ENCODE measurements at regions of chr12 and their contacts with region 1.

Region 1: DNA sequence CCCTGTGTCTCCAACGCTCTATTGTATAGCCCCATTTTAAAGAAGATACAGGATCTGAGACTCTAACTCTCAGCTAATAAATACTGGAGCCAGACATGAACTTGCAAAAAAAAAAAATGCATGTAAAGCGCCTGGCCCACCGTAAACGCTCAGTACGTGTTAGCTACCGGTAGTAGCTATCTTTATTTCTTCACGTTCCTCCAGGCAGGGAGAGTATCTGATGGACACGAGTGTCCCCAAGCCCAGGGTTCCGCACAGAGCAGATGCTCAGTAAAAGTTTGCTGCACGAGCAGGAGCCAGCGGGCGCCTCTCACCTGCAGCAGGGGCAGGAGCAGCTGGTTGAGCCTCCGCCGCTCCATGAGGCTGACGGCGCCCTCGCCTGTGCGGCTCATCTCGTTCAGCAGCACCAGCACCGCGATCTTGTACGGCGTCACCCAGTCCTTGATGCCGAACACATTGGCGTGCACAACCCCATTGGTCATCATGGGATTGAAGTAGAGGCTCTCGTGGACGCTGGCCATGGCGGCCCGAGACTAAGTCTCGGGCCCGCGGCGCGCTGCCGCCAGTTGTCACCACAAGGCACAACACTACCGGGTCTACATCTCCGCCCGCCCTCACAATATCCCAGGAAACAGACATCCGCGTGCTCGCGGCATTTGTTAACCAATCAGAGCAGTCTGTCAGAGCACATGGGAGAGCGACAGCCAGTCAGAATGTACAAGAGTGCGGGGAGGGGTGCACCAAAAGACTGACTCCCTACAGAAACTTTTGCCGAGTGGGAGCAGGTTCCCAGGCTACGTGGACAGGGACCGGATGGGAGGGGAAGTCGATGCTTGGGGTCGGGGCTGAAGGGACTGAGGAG is at the start of gene ANAPC5:
- DNase-seq: peak; percentile 98
- H3K4me3 ChIP-seq: peak within 1 kb of the TSS; percentile 64 to 87 (median 76)
- H3K27ac ChIP-seq: peak within 1 kb of the TSS; percentile 79 to 85 (median 82)
- H3K4me1 ChIP-seq: peaks cover 0 to 28% (median 18%) of the 10 kb centered on the region in 4 donors
- H3K27me3 ChIP-seq: no peaks in the 10 kb centered on the region
- CTCF ChIP-seq: no peak
- EP300 ChIP-seq: no peak
- POLR2A ChIP-seq: peak; percentile 57 to 66
- total RNA-seq, gene ANAPC5: 76.0 to 93.6 (median 85.9) TPM

Region 2: GRCh38 chr12:121399391-121400331 is 47.6 kb after region 1 on chr12 and contains the start of gene RNF34:
- intact Hi-C with region 1: loop called (anchors 2 kb)
- DNase-seq: peak; percentile 99
- H3K4me3 ChIP-seq: peak within 1 kb of the TSS; percentile 66 to 77 (median 70)
- H3K27ac ChIP-seq: peak within 1 kb of the TSS; percentile 91 to 92 (median 91)
- H3K4me1 ChIP-seq: peaks cover 0 to 38% (median 30%) of the 10 kb centered on the region in 4 donors
- H3K27me3 ChIP-seq: no peaks in the 10 kb centered on the region
- CTCF ChIP-seq: no peak
- EP300 ChIP-seq: peak in 1 of 4 donors; percentile 29
- POLR2A ChIP-seq: peak; percentile 91 to 96
- total RNA-seq, gene RNF34: 34.1 to 52.4 (median 37.4) TPM